ENCODE measurements at regions of chr19 and their contacts with region 1.

Region 1: DNA sequence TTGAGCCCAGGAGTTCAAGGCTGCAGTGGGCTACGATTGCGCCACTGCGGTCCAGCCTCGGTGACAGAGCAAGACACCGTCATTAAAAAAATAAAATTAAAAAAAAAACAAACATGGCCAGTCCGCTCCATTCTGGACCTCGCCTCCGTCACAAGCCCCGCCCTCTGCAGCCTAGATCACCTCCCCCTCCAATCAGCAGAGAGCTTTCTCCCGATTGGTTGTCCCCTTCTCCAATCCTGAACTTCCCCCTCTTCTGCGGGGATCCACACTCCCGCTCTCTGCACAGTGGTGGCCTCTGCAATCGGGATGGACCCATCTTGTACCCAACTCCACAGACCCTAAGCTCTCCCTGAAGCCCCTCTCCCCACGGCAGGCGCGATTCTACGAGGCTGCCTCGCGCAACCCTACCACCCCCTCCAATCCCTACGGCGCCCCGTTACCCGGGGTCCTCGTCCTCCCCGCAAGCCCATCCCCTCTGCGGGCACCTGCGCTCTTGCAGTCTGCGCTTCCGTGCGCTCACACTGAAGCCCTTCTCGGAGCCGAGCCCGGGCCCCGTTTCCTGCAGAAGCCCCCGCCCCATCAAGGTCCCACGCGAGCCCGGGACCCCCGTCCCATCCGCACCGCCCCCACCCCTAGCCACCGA is 540 bp downstream of the TMEM160 start:
- DNase-seq: peak; percentile 92
- ATAC-seq: peak; percentile 73
- H3K4me3 Mint-ChIP-seq: peak overlapping the region; percentile 90
- H3K27ac Mint-ChIP-seq: peak overlapping the region; percentile 86
- H3K4me1 Mint-ChIP-seq: peaks cover 8% of the 10 kb centered on the region
- H3K27me3 Mint-ChIP-seq: no peaks in the 10 kb centered on the region

Region 2: DNA sequence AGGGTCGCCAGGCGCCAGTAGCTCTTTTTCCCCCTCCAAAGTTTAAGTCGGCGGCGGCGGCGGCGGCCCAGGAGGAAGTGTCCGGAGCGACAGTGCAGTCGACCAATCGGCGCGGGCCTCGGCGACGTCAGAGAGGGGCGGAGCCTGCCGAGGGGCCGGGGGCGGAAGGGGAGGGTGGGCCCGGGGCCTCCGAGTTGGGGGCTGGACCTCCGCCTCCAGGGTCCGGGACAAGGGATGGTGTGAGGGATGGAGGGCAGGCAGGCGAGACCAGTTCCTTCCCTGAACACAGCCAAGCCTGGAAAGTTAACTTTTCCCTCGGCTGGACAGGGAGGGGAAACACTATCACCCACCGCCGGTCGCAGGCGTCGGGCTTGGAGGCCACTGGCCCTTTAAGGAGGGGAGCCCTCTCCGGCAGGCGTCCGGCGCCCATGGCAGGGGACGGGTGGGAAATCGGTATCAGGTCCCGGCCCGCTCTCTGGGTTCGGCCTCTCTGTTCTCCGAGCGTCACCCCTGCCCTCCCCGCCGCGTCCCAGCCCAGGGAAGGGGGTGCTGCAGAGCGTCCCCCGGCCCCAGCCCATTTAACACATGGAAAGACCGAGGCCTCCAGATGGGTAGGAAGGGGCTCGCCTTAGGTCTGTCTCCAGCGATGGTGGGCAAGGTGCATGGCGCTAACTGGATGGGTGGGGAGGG is 330.7 kb before region 1 on chr19 and contains the start of gene PRKD2:
- CTCF ChIA-PET with region 1: no interaction called
- POLR2A ChIA-PET with region 1: no interaction called
- intact Hi-C with region 1: loop called in 1 of 2 experiments (anchors 5 kb)
- DNase-seq: peak; percentile 95
- ATAC-seq: peak; percentile 66
- H3K4me3 Mint-ChIP-seq: peak within 1 kb of the TSS; percentile 94
- H3K27ac Mint-ChIP-seq: peak within 1 kb of the TSS; percentile 95
- H3K4me1 Mint-ChIP-seq: peaks cover 40% of the 10 kb centered on the region
- H3K27me3 Mint-ChIP-seq: no peaks in the 10 kb centered on the region
- total RNA-seq, gene PRKD2: 76.0 to 78.3 TPM

Region 3: GRCh38 chr19:46850228-46851203 is 197.4 kb before region 1 on chr19 and contains the start of gene AP2S1:
- CTCF ChIA-PET with region 1: no interaction called
- POLR2A ChIA-PET with region 1: no interaction called
- intact Hi-C with region 1: loop called (anchors 1 kb)
- DNase-seq: peak; percentile 95
- ATAC-seq: peak; percentile 97
- H3K4me3 Mint-ChIP-seq: peak within 1 kb of the TSS; percentile 92
- H3K27ac Mint-ChIP-seq: peak within 1 kb of the TSS; percentile 64
- H3K4me1 Mint-ChIP-seq: peaks cover 21% of the 10 kb centered on the region
- H3K27me3 Mint-ChIP-seq: no peaks in the 10 kb centered on the region
- total RNA-seq, gene AP2S1: 102 to 104 TPM

Region 4: DNA sequence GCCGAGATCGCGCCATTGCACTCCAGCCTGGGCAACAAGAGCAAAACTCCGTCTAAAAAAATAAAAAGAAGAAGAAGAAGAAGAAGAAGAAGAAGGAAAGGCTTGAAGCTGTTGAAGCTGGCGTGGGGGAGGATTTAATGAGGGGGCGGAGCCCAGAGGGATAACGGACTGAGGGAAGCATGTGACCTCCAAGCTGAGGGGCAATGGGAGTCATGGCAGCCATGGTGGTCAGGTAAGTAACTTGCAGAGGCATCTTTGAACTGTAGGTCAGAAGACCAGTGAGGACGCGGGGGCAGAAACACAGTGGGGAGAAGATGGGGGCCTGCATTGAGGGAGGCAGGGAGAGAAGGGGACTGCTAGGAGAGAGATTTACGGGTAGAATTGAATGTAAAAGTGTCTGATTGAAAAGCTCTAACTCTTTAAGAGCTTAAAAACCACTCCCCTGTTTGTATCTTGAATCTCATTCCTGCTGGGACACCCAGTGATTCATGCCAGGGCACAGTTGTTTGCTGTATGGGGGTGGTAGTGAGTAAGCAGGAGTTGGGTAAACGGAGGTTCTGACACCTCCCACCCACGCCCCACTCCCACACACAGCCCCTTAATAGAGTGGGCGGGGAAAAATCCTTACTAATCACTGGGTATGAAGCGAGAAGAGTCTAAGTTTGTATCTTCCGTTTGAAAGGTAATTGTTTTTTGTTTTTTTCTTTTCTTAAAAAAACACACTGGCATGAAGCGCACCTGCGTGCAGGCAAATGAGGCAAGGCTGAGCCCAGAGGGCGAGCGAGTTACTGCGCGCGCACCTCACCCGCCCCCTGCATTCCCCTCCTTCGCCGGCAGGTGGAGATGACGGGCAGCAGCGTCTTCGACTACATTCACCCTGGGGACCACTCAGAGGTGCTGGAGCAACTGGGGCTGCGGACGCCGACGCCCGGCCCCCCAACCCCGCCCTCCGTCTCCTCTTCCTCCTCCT is 12.5 kb before region 1 on chr19:
- CTCF ChIA-PET with region 1: interaction called, 6 read pairs
- POLR2A ChIA-PET with region 1: interaction called, 3 read pairs
- intact Hi-C with region 1: loop called (anchors 1 kb)
- DNase-seq: peak; percentile 96
- ATAC-seq: peak; percentile 93
- H3K4me3 Mint-ChIP-seq: peak overlapping the region; percentile 73
- H3K27ac Mint-ChIP-seq: peak overlapping the region; percentile 80
- H3K4me1 Mint-ChIP-seq: peaks cover 22% of the 10 kb centered on the region
- H3K27me3 Mint-ChIP-seq: peaks cover 4% of the 10 kb centered on the region

Region 5: GRCh38 chr19:47225746-47226425 is 178.0 kb after region 1 on chr19:
- CTCF ChIA-PET with region 1: no interaction called
- POLR2A ChIA-PET with region 1: no interaction called
- intact Hi-C with region 1: loop called in 1 of 2 experiments (anchors 1 kb)
- DNase-seq: peak; percentile 93
- ATAC-seq: peak; percentile 70
- H3K4me3 Mint-ChIP-seq: peak overlapping the region; percentile 77
- H3K27ac Mint-ChIP-seq: no peak overlapping the region
- H3K4me1 Mint-ChIP-seq: peaks cover 16% of the 10 kb centered on the region
- H3K27me3 Mint-ChIP-seq: no peaks in the 10 kb centered on the region

Measured in activated CD4-positive, alpha-beta T cell treated with anti-CD3 and anti-CD28 coated beads for 36 hours (primary cell).